Right lobe of liver (tissue), 6 donors: ENCODE measurements at regions of chrX and their contacts with region 1.

Region 1: GRCh38 chrX:118644378-118644777 is 83.0 kb upstream of the IL13RA1 start:
- DNase-seq: no peak
- ATAC-seq: peak; percentile 80 to 95 (median 86)
- H3K4me3 ChIP-seq: no peak overlapping the region
- H3K27ac ChIP-seq: no peak overlapping the region
- H3K4me1 ChIP-seq: no peaks in the 10 kb centered on the region
- H3K27me3 ChIP-seq: no peaks in the 10 kb centered on the region
- CTCF ChIP-seq: peak; percentile 56 to 64 (median 58)
- POLR2A ChIP-seq: no peak

Region 2: DNA sequence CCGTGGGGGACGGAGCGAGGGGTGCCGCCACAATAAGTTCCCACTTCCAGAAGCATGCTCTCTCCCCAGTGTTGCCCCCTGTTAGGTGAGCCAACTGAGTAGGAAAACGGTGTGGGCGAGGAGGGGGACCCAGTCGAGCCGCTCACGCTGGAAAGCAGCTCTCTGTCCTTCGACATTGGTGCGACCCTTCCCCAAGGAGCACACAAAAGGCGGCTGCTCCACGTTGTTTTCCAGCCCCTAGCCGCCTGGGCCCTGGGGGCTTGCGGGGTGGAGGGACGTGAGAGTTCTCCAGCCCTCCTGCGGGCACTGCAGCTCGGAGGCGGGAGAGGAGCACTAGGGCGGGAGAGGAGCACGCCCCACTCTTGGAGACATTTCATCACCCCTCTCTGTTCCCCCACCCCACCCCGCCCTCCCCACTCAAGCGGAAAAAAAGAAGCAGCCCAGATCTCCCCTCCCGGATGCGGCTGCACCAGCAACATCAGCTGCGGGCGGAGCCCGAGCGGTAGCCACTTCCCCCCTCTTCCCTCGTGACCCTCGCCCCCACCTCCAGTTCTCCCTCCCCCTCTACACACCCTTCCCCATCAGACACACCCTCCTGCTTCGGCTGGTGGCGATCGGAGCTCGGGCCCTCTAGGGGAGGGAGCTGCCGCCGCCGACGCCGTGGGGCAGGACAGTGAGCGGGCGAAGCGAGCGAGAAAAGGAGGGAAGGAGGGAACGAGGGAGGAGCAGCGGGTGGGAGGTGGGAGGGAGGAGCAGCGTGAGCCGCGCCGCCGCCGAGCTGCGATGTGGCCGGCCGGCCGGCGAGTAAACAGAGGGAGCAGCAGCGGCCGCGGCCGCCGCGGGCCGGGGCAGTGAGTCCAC is 149.1 kb before region 1 on chrX and contains the start of gene DOCK11:
- intact Hi-C with region 1: no loop called
- DNase-seq: peak; percentile 63 to 79 (median 66)
- ATAC-seq: peak; percentile 79 to 86 (median 82)
- H3K4me3 ChIP-seq: peak within 1 kb of the TSS; percentile 31 to 60 (median 48)
- H3K27ac ChIP-seq: peak within 1 kb of the TSS; percentile 2 to 53 (median 13)
- H3K4me1 ChIP-seq: peaks cover 0 to 3% (median 0%) of the 10 kb centered on the region in 4 donors
- H3K27me3 ChIP-seq: no peaks in the 10 kb centered on the region
- CTCF ChIP-seq: no peak
- POLR2A ChIP-seq: peak; percentile 27
- total RNA-seq, gene DOCK11: 1.1 to 4.4 (median 3.2) TPM

Region 3: DNA sequence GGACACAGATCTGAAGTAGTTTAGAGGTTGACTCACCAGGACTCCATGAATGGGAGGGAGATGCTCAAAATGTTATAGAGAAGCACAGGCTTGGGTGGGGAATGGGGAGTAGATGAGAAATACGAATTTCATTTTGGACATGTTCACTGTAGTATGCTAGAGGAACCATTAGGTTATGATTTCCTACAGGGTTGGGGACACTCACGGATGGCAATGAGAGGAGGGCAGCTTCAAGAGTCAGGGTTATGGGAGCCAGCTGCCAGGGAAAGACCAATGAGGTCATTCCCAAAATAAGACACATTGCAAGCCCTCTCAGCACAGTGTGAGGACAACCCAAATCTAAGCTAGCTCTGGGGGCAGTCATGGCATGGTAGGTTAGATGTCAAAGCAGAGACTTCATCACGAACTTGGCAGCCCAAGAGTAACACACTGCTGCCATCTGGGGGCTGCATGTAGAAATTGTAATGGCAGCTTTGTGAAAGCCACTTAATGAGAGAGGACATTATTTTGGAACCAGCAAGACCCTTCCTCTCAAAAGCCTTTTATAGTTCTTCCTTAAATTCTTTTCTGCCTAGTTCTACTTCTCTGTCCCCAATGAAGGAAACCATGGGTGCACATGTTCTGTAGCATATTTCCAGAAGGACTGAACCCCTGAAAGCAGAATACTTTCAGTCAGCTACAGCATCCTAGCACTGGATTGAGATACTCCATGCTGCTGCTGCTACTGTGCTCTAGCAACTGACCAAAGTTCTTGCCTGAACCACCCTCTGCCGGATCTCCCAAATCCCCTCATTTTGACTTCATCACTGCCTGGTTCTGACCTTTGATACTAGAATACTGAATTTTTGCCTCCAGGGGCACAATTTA is 163.0 kb after region 1 on chrX:
- intact Hi-C with region 1: loop called (anchors 5 to 10 kb)
- DNase-seq: no peak
- ATAC-seq: peak; percentile 84 to 93 (median 89)
- H3K4me3 ChIP-seq: no peak overlapping the region
- H3K27ac ChIP-seq: no peak overlapping the region
- H3K4me1 ChIP-seq: no peaks in the 10 kb centered on the region
- H3K27me3 ChIP-seq: no peaks in the 10 kb centered on the region
- CTCF ChIP-seq: peak; percentile 71 to 80 (median 75)
- POLR2A ChIP-seq: no peak